ENCODE measurements at regions of chr18 and their contacts with region 1.

Region 1: GRCh38 chr18:68035774-68036522 is 519.4 kb upstream of the DSEL start:
- DNase-seq: no peak
- ATAC-seq: no peak
- H3K4me3 Mint-ChIP-seq: no peak overlapping the region
- H3K27ac Mint-ChIP-seq: no peak overlapping the region
- H3K4me1 Mint-ChIP-seq: no peaks in the 10 kb centered on the region
- H3K27me3 Mint-ChIP-seq: no peaks in the 10 kb centered on the region

Region 2: DNA sequence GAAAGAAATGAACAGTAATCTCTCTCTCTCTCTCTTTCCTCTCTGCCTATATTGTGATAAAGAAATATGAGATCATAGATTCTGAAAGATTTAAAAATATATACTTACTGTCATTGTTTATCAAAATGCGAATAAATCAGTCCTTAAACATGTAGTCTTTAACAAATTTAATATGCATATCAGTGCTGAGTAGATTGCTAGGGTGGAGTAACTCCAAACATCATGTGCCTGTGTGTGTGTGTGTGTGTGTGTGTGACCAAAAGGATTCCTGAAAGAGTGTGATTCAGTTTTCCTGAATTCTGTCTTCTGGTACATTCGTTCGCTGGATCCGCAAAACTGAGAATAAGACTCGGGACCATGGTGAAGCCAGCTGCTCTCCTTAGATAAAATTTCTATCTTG is 495.4 kb before region 1 on chr18:
- CTCF ChIA-PET with region 1: no interaction called
- POLR2A ChIA-PET with region 1: no interaction called
- intact Hi-C with region 1: loop called in 1 of 2 experiments (anchors 5 kb)
- DNase-seq: no peak
- ATAC-seq: no peak
- H3K4me3 Mint-ChIP-seq: no peak overlapping the region
- H3K27ac Mint-ChIP-seq: no peak overlapping the region
- H3K4me1 Mint-ChIP-seq: no peaks in the 10 kb centered on the region
- H3K27me3 Mint-ChIP-seq: peaks cover 3% of the 10 kb centered on the region